ENCODE measurements at regions of chr13 and their contacts with region 1.

Region 1: DNA sequence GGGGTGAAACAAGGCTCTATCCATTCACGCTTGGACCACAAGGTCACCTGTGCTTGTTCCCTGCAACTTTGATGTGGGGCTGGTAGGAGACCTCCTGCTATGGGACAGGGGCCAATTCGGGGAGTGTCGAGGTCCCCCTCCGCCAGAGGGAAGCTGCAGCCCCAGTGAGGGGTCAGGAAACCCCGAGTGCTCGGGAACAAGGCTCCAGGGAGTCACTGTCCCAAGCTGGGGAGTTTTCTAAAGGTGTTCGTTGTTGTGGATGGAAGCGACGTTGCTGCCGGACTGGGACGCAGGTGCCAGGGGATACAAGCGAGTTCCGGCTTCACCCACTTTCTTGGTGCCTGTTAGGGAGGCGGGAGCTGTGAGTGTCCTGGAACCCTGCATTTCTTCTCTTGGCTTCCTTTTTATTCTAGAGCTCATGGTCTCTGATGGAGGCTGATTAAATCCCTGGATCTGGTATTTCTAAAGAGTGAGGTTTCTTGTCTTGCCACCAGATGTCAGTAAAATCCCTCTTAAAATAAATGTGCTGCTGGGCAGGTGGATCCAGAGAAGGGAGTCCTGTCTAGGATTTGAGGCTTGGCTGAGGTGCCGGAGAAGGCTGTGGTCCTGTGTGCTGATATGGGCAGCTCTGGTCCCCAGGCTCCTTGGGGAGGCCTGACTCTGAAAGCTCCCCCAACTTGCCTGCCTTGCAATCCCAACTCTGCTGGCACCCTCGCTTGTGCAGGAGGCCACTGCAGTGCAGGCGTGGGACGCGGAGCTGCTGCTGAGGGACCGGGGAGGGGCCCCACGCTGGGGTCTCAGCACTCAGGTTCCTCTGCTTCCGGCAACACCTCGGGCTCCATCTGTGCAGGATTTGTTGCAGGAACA is 153.9 kb downstream of the TEX29 start:
- DNase-seq: peak in 3 of 10 donors; percentile 21 to 34 (median 23)
- H3K4me3 ChIP-seq: no peak overlapping the region
- H3K27ac ChIP-seq: no peak overlapping the region
- H3K27me3 ChIP-seq: peaks cover 0 to 14% (median 0%) of the 10 kb centered on the region in 45 donors
- CTCF ChIP-seq: peak; percentile 39 to 84 (median 68)

Region 2: DNA sequence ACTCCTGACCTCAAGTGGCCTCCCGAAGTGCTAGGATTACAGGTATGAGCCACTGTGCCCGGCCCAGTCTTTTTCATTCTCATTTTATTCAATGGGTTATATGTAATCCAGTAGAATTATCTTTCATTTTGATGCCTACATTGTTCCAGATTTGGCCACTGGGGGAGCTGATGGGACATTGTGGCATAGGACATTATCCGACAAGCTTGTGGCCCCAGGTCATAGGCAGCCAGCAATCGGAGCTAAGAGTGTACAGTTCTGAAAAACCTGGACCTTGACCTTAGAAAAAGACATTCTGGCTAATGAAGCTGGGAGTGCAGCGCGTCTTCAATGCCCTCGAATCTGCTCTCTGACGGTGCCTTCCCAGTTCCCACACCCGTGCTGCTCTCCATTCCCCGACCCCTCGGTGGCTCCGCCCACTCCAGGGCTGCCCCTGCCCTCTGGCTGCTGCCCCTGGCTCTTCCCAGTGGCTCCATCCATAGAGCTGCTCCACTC is 45.3 kb before region 1 on chr13:
- intact Hi-C with region 1: no loop called
- DNase-seq: peak in 4 of 10 donors; percentile 11 to 66 (median 51)
- H3K4me3 ChIP-seq: peak overlapping the region in 1 of 59 donors; percentile 31
- H3K27ac ChIP-seq: no peak overlapping the region
- H3K27me3 ChIP-seq: peaks cover 0 to 72% (median 4%) of the 10 kb centered on the region in 45 donors
- CTCF ChIP-seq: peak; percentile 41 to 74 (median 62)

Region 3: GRCh38 chr13:112443995-112444860 is 969.9 kb after region 1 on chr13:
- intact Hi-C with region 1: loop called (anchors 1 to 2 kb)
- DNase-seq: peak in 9 of 10 donors; percentile 25 to 82 (median 68)
- H3K4me3 ChIP-seq: no peak overlapping the region
- H3K27ac ChIP-seq: no peak overlapping the region
- H3K27me3 ChIP-seq: peaks cover 0 to 54% (median 19%) of the 10 kb centered on the region in 45 donors
- CTCF ChIP-seq: peak; percentile 63 to 94 (median 85)

Region 4: GRCh38 chr13:112510002-112510780 is 1035.8 kb after region 1 on chr13:
- intact Hi-C with region 1: loop called in 1 of 2 experiments (anchors 10 kb)
- DNase-seq: peak in 7 of 10 donors; percentile 24 to 56 (median 38)
- H3K4me3 ChIP-seq: no peak overlapping the region
- H3K27ac ChIP-seq: no peak overlapping the region
- H3K27me3 ChIP-seq: no peaks in the 10 kb centered on the region
- CTCF ChIP-seq: peak; percentile 3 to 75 (median 60)